ENCODE measurements at regions of chr17 and their contacts with region 1.

Region 1: DNA sequence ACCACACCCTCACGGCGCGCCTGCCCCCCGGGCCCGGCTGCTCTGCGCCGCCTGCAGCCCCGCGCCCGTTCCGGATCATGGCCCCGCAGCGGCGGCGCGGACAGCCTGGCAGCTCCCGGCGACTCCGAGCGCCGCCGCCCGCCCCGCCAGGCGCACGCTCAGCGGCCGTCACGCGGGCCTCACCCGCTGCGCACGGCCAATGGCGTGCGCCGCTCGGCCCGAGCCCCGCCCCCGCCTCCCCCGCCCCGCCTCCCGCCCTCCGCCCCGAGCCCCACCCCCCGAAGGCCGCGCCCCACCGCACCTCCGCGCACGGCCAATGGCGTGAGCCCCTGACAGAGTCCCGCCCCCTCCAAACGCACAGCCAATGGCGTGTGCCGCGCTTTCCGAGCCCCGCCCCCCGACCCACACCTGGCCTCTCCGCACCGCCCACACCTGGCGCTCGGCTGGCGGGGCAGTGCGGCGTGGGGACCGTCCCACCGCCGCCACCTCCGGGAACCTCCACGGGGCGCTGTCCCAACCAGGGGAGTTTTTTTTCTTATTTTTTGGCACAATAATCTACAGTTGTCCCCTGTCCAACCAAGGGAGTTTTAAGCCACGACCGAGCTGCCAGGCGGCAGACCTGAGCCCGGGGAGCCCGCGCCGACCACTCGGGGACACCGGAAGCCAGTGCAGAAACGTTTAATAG is at the start of gene PCYT2:
- DNase-seq: peak; percentile 47 to 92
- H3K4me3 ChIP-seq: peak within 1 kb of the TSS; percentile 88 to 89
- H3K27ac ChIP-seq: peak within 1 kb of the TSS; percentile 79 to 83
- H3K4me1 ChIP-seq: peaks cover 2 to 10% of the 10 kb centered on the region in 2 donors
- H3K27me3 ChIP-seq: no peaks in the 10 kb centered on the region
- CTCF ChIP-seq: peak in 1 of 3 experiments; percentile 9
- total RNA-seq, gene PCYT2: 81.1 TPM

Region 2: GRCh38 chr17:81607431-81607830 is 304.0 kb before region 1 on chr17:
- intact Hi-C with region 1: no loop called
- DNase-seq: no peak
- H3K4me3 ChIP-seq: no peak overlapping the region
- H3K27ac ChIP-seq: no peak overlapping the region
- H3K4me1 ChIP-seq: no peaks in the 10 kb centered on the region
- H3K27me3 ChIP-seq: no peaks in the 10 kb centered on the region
- CTCF ChIP-seq: no peak

Region 3: GRCh38 chr17:81833160-81833920 is 78.1 kb before region 1 on chr17 and contains the start of gene MCRIP1:
- intact Hi-C with region 1: loop called (anchors 1 kb)
- DNase-seq: peak; percentile 77 to 97
- H3K4me3 ChIP-seq: peak within 1 kb of the TSS; percentile 92 to 94
- H3K27ac ChIP-seq: peak within 1 kb of the TSS; percentile 91 to 94
- H3K4me1 ChIP-seq: peaks cover 16 to 22% of the 10 kb centered on the region in 2 donors
- H3K27me3 ChIP-seq: no peaks in the 10 kb centered on the region
- CTCF ChIP-seq: no peak
- total RNA-seq, gene MCRIP1: 149 TPM

Region 4: DNA sequence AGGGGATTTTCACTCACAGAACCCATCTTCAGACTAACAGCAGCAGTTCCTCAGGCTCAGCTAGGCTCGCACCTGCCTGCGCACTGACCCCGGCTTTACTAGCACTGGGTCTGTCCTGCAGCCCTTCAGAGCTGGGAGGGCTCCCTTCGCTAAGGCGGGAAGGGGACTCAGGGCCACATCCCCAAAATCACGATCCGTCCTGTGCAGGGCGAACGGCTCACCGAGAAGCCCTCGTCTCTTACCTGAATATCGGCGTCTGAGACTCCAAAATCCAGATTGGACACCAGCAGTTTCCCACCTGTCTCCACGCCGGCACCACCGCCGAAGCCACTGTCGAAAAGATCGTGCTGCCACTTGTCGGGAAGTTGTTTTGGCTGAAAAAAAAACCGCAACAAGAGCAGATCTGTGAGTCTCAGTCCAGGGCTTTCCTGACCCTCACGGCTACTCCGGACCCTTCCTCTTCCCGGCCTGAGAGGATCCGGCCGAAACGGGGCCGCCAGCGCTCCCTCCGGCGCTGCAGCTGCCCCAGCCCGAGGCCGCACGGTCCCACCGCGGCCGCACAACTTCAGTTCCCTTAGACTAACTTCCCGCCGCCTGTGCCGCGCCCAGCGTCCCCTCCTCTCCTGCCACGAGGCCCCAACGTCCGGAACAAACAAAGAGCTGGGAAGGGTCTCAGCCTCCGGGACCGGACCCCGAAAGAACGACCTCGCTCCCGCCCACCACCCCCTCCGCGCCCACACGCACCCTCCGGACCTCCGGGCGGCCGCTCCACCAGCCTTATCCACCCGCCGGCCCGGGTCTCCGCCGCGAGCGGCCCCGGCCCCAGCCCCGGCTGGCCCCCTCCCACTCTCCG is 20.7 kb before region 1 on chr17:
- intact Hi-C with region 1: loop called (anchors 1 kb)
- DNase-seq: peak in 1 of 2 donors; percentile 62
- H3K4me3 ChIP-seq: peak overlapping the region; percentile 80 to 96
- H3K27ac ChIP-seq: peak overlapping the region; percentile 80 to 89
- H3K4me1 ChIP-seq: peaks cover 12 to 19% of the 10 kb centered on the region in 2 donors
- H3K27me3 ChIP-seq: no peaks in the 10 kb centered on the region
- CTCF ChIP-seq: no peak

Measured in ascending aorta (tissue), 2 donors.